Calu3 (cell line): ENCODE measurements at regions of chr5 and their contacts with region 1.

Region 1: DNA sequence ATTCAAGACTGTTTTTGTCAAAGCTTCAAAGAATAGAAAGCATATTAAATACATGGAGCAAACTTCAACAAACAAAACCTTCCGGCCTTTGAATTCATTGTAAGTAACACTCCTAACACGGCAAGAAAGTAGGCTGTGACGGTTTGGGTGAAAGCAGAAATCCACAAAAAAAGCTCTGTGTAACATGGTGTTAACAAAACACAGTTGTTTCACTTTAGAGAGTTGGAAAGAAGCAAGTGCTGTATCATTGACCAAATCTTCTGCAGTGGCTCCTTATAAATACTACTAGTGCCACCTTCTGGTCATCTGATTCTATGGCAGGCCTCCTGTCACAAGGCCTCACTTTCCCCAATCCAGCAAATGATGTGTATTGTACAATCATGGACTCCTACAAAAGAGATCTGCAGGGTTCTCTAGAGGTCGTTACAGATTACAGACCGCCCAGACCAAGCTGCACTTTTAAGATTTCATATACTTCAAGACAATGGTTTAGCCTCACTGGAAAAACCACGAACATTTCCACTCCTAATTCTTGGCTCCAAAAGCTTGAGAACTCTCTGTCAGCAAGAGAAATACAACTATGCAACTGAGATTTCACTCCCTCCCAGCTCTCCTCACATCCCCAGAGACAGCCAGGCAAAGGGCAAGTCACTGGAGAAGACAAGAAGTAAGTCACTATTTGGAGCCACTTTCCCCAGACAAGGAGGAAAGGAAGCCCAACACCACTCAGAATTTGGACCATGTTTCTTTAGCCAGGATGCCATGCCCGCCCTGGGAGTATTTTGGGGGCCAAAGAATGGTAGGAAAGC is 196.2 kb downstream of the DTWD2 start:
- DNase-seq: peak; percentile 41
- H3K4me3 Mint-ChIP-seq: no peak overlapping the region
- H3K27ac Mint-ChIP-seq: no peak overlapping the region
- H3K4me1 Mint-ChIP-seq: no peaks in the 10 kb centered on the region
- H3K27me3 Mint-ChIP-seq: no peaks in the 10 kb centered on the region
- CTCF ChIP-seq: peak; percentile 71

Region 2: DNA sequence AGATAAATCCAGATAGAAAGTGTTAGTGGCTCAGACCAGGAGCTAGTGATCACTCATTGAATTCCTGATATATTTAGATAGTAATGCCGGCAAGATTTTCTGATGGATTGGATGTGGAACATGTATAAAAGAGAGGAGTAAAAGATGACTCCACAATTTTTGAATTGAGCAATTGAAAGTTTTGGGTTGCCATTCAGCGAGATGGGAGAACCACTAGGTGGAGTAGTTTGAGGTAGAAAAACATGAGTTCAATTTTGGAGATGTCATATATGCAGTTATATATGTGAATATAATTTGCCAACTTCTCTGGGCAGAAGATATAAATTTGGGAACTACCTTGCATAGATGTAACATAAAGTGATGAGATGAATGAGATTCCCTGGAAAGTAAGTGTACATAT is 1715.0 kb before region 1 on chr5:
- CTCF ChIA-PET with region 1: no interaction called
- intact Hi-C with region 1: loop called (anchors 5 kb)
- DNase-seq: no peak
- H3K4me3 Mint-ChIP-seq: no peak overlapping the region
- H3K27ac Mint-ChIP-seq: no peak overlapping the region
- H3K4me1 Mint-ChIP-seq: no peaks in the 10 kb centered on the region
- H3K27me3 Mint-ChIP-seq: no peaks in the 10 kb centered on the region
- CTCF ChIP-seq: peak; percentile 45

Region 3: DNA sequence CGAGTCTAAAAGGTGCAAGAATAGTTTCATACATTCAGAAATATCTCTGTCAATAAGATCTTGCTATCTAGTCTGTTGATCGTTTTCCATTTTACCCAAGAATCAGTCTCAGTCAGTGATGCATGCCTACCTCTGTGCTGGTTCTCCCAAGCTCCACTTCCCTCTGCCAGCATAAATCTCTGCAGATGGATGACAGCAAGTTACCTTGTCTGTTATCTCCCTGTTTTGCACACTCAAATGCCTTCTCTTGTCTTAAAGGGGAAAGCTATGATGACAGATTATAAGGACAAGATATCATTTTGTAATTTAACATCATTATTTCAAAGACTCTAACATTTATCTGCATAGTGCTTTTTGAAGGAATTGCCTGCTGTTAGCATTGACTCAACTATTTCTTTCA is 1415.4 kb before region 1 on chr5:
- CTCF ChIA-PET with region 1: no interaction called
- intact Hi-C with region 1: no loop called
- DNase-seq: no peak
- H3K4me3 Mint-ChIP-seq: no peak overlapping the region
- H3K27ac Mint-ChIP-seq: no peak overlapping the region
- H3K4me1 Mint-ChIP-seq: no peaks in the 10 kb centered on the region
- H3K27me3 Mint-ChIP-seq: no peaks in the 10 kb centered on the region
- CTCF ChIP-seq: no peak

Region 4: GRCh38 chr5:117788594-117788993 is 1003.5 kb before region 1 on chr5:
- CTCF ChIA-PET with region 1: no interaction called
- intact Hi-C with region 1: loop called (anchors 2 kb)
- DNase-seq: peak; percentile 35
- H3K4me3 Mint-ChIP-seq: no peak overlapping the region
- H3K27ac Mint-ChIP-seq: no peak overlapping the region
- H3K4me1 Mint-ChIP-seq: peaks cover 11% of the 10 kb centered on the region
- H3K27me3 Mint-ChIP-seq: no peaks in the 10 kb centered on the region
- CTCF ChIP-seq: no peak

Region 5: DNA sequence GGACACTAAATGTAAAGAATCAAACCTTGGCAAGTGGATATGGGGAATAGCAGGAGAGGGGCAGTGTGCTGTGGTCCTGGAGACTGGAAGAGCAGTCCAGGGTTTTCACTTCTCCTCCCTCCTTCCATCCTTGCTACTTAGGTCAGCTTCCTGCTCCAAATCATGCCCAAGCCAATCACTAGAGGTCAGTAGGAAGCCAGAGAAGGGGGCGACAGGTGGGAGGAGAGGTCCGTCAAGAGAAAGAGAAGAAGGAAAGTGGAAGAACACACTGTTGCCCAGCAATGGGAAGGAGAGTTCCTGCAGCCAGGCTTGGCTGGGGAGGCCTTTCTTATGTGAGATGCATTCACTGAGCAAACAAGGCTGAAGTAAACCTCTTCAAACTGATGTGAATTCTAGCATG is 93.4 kb before region 1 on chr5:
- CTCF ChIA-PET with region 1: no interaction called
- intact Hi-C with region 1: loop called (anchors 1 kb)
- DNase-seq: peak; percentile 14
- H3K4me3 Mint-ChIP-seq: no peak overlapping the region
- H3K27ac Mint-ChIP-seq: no peak overlapping the region
- H3K4me1 Mint-ChIP-seq: no peaks in the 10 kb centered on the region
- H3K27me3 Mint-ChIP-seq: no peaks in the 10 kb centered on the region
- CTCF ChIP-seq: no peak